Endothelial cell of umbilical vein (primary cell): ENCODE measurements at regions of chr11 and their contacts with region 1.

Region 1: DNA sequence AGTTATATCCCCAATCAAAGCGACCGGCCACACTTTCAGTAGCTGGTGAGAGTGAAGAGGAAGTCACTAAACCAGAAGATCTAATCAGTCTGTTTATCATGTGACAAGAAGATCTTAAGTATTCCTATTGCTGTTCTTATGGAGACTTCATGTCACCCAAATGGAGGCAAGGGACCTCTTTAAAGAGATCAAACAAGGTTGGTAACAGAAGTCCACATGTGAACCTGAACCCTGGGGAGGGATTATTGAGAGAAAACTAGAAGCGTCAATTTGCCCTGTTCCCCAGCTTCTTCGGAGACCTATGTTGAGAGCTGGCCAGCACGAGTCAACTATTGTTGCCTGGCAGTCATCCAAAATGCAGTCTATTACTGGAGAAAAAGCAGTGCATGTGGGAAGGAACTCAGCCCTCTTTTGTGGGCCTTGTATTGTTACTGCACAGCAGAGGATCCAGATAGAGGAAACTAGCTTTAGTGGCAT is 76.9 kb upstream of the CTSC start:
- DNase-seq: peak; percentile 92
- H3K4me3 ChIP-seq: no peak overlapping the region
- H3K27ac ChIP-seq: no peak overlapping the region
- H3K4me1 ChIP-seq: peaks cover 18% of the 10 kb centered on the region
- H3K27me3 ChIP-seq: no peaks in the 10 kb centered on the region
- CTCF ChIP-seq: no peak
- POLR2A ChIP-seq: no peak

Region 2: DNA sequence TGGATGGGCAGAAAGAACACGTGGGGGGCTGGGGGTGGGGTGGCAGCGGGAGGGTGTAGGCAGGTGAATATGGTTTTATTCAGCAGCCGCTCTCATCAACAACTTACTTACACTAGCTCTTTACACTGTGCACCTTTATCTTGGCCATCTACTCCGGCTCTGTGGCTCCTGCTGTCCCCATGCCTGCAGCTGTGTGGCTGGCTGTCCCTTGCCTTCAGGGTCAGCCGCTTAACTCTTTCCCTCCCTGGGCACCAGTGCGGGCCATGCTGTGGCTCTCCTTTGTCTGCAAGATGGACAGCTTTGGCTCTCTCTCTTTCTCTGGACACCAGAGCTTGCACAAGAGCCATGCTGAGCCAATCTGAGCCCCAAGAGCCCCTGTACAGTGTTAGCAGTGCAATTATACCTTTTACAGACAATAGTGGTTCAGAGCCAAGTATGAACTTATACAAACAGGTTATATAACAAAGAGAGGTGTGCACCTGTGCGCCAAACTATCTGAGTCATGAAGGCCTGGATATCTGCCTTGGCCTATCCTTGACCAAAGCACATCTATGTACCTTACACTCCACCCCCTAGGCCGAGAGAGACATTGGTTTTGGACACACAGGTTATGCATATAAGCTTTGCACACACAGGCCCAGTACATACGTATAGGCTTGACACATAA is 17.4 kb after region 1 on chr11:
- CTCF ChIA-PET with region 1: interaction called, 10 read pairs
- POLR2A ChIA-PET with region 1: no interaction called
- dilution Hi-C with region 1: no loop called
- intact Hi-C with region 1: no loop called
- DNase-seq: no peak
- H3K4me3 ChIP-seq: no peak overlapping the region
- H3K27ac ChIP-seq: no peak overlapping the region
- H3K4me1 ChIP-seq: no peaks in the 10 kb centered on the region
- H3K27me3 ChIP-seq: no peaks in the 10 kb centered on the region
- CTCF ChIP-seq: no peak
- POLR2A ChIP-seq: no peak

Region 3: GRCh38 chr11:88478136-88478815 is 63.9 kb after region 1 on chr11:
- CTCF ChIA-PET with region 1: no interaction called
- POLR2A ChIA-PET with region 1: no interaction called
- dilution Hi-C with region 1: no loop called
- intact Hi-C with region 1: no loop called
- DNase-seq: no peak
- H3K4me3 ChIP-seq: no peak overlapping the region
- H3K27ac ChIP-seq: no peak overlapping the region
- H3K4me1 ChIP-seq: no peaks in the 10 kb centered on the region
- H3K27me3 ChIP-seq: no peaks in the 10 kb centered on the region
- CTCF ChIP-seq: no peak
- POLR2A ChIP-seq: no peak